ENCODE measurements at regions of chr9 and their contacts with region 1.

Region 1: DNA sequence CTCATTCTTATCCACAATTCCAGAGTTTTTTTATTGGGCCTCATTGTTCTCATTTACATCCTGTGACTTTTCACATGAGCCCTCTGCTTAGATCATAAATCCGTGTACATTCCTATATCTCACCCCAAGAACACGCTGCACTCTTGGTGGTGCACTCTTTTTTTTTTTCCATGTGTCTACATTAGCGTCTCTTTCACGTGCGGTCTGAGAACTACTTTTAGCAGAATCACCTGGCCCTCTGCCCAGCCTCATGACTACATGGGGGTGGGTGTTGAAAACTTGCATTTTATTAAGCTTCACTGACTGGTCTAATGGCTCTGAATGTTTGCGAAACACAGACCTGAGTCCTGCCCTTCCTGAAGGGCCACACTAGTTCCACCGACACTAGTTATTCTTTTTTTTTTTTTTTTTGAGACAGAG is 18.6 kb downstream of the C9orf57 start:
- DNase-seq: peak in 3 of 4 donors; percentile 41 to 82 (median 79)
- ATAC-seq: peak; percentile 71
- H3K4me3 ChIP-seq: no peak overlapping the region
- H3K27ac ChIP-seq: peak overlapping the region; percentile 7 to 79
- H3K4me1 ChIP-seq: no peaks in the 10 kb centered on the region
- H3K27me3 ChIP-seq: no peaks in the 10 kb centered on the region
- CTCF ChIP-seq: no peak

Region 2: DNA sequence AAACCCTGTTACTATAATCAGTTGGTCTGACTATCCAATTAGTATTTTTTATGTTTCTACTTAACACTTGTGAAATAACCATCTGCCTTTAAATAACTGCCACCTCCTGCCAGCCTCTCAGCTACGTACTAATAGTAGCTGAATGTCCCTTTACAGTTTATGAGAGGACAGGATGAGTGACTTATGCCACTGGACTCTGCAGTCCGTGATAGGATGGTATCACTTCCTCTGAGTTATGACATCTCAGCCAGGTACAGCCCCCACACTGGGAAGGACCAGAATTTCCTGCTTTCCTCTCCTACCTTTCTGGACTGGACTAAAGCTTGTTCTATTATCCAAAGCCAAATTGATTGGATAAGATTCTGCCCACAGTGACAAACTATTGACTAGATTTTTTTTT is 220.3 kb after region 1 on chr9:
- intact Hi-C with region 1: loop called in 1 of 2 experiments (anchors 10 kb)
- DNase-seq: no peak
- ATAC-seq: no peak
- H3K4me3 ChIP-seq: no peak overlapping the region
- H3K27ac ChIP-seq: no peak overlapping the region
- H3K4me1 ChIP-seq: no peaks in the 10 kb centered on the region
- H3K27me3 ChIP-seq: peaks cover 0 to 21% of the 10 kb centered on the region in 2 donors
- CTCF ChIP-seq: no peak